ENCODE measurements at regions of chr7 and their contacts with region 1.

Region 1: DNA sequence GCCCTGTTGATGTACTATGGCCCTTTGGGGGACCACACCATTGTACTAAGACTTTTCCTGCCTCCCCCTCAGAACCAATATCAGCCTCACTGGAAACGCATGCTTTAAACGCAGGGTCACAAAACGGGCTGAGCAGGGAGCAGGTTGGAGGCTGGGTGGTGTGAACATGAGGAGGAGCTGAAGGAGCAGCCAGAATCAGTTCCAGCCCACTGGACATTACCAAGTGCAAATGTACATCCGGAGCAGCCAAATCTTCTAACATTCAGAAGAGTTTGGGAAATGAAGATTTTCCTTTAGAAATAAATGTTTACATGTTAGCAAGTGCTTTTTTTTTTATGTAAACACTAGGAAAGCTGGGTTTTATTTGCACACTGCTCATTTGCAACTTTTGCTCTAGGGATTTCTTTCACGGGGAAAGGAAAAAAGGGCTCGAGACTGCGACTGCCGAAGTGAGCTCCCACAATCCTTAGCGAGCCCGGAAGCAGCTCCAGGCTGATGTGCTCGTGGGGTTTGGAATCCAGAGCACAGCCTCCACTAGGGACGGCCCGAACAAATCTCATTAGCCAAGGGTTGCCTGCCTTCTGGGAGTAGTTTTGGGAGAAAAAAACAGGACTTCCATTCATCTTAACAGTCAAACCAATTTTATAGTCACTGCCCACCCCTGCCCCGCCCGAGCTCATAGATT is 108.0 kb upstream of the YAE1 start:
- DNase-seq: no peak
- ATAC-seq: no peak
- H3K4me3 ChIP-seq: no peak overlapping the region
- H3K27ac ChIP-seq: no peak overlapping the region
- H3K4me1 ChIP-seq: no peaks in the 10 kb centered on the region
- H3K27me3 ChIP-seq: peaks cover 62% of the 10 kb centered on the region
- CTCF ChIP-seq: no peak

Region 2: GRCh38 chr7:39394105-39394680 is 64.0 kb before region 1 on chr7:
- CTCF ChIA-PET with region 1: no interaction called
- POLR2A ChIA-PET with region 1: no interaction called
- intact Hi-C with region 1: no loop called
- DNase-seq: no peak
- ATAC-seq: no peak
- H3K4me3 ChIP-seq: no peak overlapping the region
- H3K27ac ChIP-seq: no peak overlapping the region
- H3K4me1 ChIP-seq: no peaks in the 10 kb centered on the region
- H3K27me3 ChIP-seq: peaks cover 34% of the 10 kb centered on the region
- CTCF ChIP-seq: no peak

Region 3: GRCh38 chr7:39480901-39481300 is 22.7 kb after region 1 on chr7:
- CTCF ChIA-PET with region 1: no interaction called
- POLR2A ChIA-PET with region 1: no interaction called
- intact Hi-C with region 1: no loop called
- DNase-seq: no peak
- ATAC-seq: no peak
- H3K4me3 ChIP-seq: no peak overlapping the region
- H3K27ac ChIP-seq: no peak overlapping the region
- H3K4me1 ChIP-seq: no peaks in the 10 kb centered on the region
- H3K27me3 ChIP-seq: peaks cover 33% of the 10 kb centered on the region
- CTCF ChIP-seq: no peak

Region 4: GRCh38 chr7:39527296-39527695 is 69.1 kb after region 1 on chr7:
- CTCF ChIA-PET with region 1: no interaction called
- POLR2A ChIA-PET with region 1: no interaction called
- intact Hi-C with region 1: loop called (anchors 5 kb)
- DNase-seq: no peak
- ATAC-seq: no peak
- H3K4me3 ChIP-seq: no peak overlapping the region
- H3K27ac ChIP-seq: no peak overlapping the region
- H3K4me1 ChIP-seq: no peaks in the 10 kb centered on the region
- H3K27me3 ChIP-seq: peaks cover 11% of the 10 kb centered on the region; the same call in 1 of the 2 replicates
- CTCF ChIP-seq: no peak

Measured in PC-3 (cell line).